ENCODE measurements at regions of chr12 and their contacts with region 1.

Region 1: GRCh38 chr12:130476451-130477135 is 138.9 kb downstream of the PIWIL1 start:
- DNase-seq: no peak
- H3K4me3 ChIP-seq: no peak overlapping the region
- H3K27ac ChIP-seq: no peak overlapping the region
- H3K27me3 ChIP-seq: peaks cover 0 to 8% (median 0%) of the 10 kb centered on the region in 45 donors
- CTCF ChIP-seq: no peak

Region 2: GRCh38 chr12:130576371-130576816 is 99.8 kb after region 1 on chr12:
- intact Hi-C with region 1: no loop called
- DNase-seq: peak in 7 of 10 donors; percentile 37 to 68 (median 61)
- H3K4me3 ChIP-seq: no peak overlapping the region
- H3K27ac ChIP-seq: peak overlapping the region in 41 of 59 donors; percentile 15 to 80 (median 62)
- H3K27me3 ChIP-seq: no peaks in the 10 kb centered on the region
- CTCF ChIP-seq: no peak

Region 3: DNA sequence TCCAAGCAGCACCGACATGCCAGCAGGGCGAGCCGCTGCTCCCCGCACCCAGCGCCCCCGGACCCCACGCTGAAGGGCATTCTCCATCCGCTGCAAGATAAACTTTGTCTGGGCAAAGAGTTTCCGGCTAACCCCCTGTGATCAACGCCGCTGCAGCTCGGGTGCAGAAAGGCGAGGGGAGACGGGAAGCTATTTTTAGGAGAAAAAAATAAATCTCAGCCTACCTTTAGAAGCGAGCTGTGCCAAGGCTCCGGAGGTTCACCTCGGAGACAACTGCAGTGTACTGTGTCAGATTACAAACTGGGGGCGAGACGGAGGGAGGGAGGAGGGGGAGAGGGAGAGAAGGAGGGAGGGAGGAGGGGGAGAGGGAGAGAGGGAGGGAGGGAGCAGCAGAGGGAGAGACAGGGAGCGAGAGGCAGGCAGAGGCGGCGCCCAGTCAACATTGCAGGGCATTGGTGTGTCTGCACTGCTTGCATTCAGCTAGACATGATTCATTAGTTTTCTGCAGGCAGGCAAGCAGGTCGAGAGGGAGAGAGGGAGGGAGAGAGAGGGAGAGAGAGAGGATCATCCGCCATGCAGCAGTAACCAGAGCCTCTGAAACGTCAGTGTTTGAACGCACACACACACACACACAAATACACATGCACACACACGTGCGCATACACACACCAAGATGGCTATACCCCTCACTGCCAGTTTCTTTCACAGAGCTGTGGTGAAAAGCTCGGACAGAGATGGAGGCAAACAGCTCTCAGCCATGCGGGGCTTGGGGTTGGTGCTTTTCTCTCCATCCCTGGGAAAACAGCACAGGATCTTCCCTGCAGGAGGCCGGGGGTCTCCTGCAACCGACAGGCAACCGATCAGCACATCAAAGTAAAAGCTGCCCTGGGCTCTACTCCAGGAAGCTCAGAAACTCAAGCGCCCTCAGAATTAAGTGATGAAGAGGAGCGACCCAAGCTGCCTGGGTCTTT is 239.7 kb after region 1 on chr12 and contains the start of gene RIMBP2:
- intact Hi-C with region 1: loop called in 1 of 2 experiments (anchors 10 kb)
- DNase-seq: peak in 7 of 10 donors; percentile 55 to 86 (median 74)
- H3K4me3 ChIP-seq: peak within 1 kb of the TSS; percentile 33 to 73 (median 62)
- H3K27ac ChIP-seq: peak within 1 kb of the TSS in 54 of 59 donors; percentile 11 to 85 (median 72)
- H3K27me3 ChIP-seq: peaks cover 0 to 34% (median 9%) of the 10 kb centered on the region in 45 donors
- CTCF ChIP-seq: no peak
- total RNA-seq, gene RIMBP2: 26.8 to 136 (median 82.0) TPM

Measured in dorsolateral prefrontal cortex (tissue), 120 donors.